ENCODE measurements at regions of chr6 and their contacts with region 1.

Region 1: DNA sequence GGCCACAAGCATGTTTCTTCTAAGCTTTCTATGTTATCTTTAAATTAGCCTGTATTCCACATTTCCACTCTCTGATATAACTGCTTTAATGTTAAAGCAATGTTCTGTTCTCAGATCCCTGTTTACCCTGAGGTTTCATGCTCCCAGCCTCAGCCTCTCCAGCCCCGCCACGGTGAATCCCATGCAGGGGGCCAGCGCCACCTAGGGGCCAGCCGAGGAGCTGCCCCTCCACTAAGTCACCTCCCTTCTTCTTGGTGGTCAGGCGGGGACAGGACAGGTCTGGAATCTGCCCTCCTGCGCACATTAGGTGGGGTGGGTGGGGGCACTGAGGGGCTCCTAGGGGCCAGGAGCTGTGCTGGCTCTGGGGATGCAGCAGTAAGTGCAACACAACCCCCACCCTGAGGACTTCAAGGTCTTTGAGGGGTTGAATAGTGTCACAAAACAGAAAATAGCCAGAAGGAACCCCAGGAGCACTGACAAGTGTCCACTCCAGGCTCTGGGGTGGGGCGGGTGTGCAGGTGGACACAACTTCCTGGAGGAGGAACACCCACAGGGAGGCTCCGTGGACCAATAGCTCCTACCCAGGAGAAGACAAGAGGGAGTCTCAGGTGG is 61.6 kb downstream of the RAB44 start:
- DNase-seq: peak; percentile 79
- H3K4me3 Mint-ChIP-seq: no peak overlapping the region
- H3K27ac Mint-ChIP-seq: no peak overlapping the region
- H3K4me1 Mint-ChIP-seq: peaks cover 43% of the 10 kb centered on the region
- H3K27me3 Mint-ChIP-seq: no peaks in the 10 kb centered on the region

Region 2: DNA sequence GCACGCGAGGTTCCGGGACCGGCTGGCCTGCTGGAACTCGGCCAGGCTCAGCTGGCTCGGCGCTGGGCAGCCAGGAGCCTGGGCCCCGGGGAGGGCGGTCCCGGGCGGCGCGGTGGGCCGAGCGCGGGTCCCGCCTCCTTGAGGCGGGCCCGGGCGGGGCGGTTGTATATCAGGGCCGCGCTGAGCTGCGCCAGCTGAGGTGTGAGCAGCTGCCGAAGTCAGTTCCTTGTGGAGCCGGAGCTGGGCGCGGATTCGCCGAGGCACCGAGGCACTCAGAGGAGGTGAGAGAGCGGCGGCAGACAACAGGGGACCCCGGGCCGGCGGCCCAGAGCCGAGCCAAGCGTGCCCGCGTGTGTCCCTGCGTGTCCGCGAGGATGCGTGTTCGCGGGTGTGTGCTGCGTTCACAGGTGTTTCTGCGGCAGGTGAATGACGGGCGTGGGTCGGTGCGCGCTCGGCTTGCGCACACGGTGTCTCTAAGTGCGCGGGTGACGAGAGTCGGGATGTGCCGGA is 80.7 kb before region 1 on chr6 and contains the start of gene CDKN1A:
- CTCF ChIA-PET with region 1: interaction called, 11 read pairs
- POLR2A ChIA-PET with region 1: no interaction called
- DNase-seq: peak; percentile 76
- H3K4me3 Mint-ChIP-seq: peak within 1 kb of the TSS; percentile 96
- H3K27ac Mint-ChIP-seq: peak within 1 kb of the TSS; percentile 90
- H3K4me1 Mint-ChIP-seq: peaks cover 60% of the 10 kb centered on the region
- H3K27me3 Mint-ChIP-seq: peaks cover 15% of the 10 kb centered on the region
- total RNA-seq, gene CDKN1A: 36.7 to 39.5 TPM

Region 3: DNA sequence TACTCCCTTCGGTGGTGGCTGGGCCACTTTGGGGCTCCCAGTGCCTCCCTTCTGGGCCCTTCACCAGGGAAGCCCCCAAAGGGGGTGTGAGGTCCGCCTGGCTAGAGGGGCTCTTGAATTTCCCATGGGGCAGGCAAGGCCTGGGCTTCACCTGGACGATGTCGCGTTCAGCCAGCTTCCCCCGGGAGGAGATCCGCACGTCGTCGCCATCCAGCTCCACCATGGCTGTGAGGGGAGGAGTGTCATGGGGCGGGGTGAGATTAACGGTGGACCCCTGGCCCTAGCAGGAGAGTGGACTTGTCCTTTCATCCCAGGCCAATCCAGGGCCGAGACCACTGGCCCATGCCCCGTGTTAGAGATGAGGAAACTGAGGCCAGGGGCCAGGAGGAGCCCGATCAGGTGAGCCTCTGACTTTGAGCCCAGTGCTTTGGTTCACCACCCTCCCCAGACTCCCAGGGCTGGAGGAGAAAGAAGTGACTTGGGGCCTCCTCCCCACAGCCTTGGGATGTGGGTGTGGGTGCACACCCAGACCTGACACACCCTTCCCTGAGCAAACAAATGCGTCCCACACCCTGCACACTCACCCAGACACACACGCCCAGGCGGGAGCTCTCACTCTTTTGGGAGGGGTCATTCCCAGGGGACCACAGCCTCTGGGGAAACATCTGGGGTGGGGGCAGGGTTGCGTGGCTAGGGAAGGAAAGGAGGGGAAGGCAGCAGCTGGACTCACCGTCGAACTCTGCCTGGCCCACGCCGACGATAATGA is 15.5 kb before region 1 on chr6:
- CTCF ChIA-PET with region 1: interaction called, 12 read pairs
- POLR2A ChIA-PET with region 1: no interaction called
- DNase-seq: no peak
- H3K4me3 Mint-ChIP-seq: peak overlapping the region; percentile 5
- H3K27ac Mint-ChIP-seq: peak overlapping the region; percentile 62
- H3K4me1 Mint-ChIP-seq: peaks cover 28% of the 10 kb centered on the region
- H3K27me3 Mint-ChIP-seq: no peaks in the 10 kb centered on the region

Region 4: GRCh38 chr6:36780442-36781177 is 21.4 kb after region 1 on chr6:
- CTCF ChIA-PET with region 1: interaction called, 157 read pairs
- POLR2A ChIA-PET with region 1: no interaction called
- DNase-seq: no peak
- H3K4me3 Mint-ChIP-seq: no peak overlapping the region
- H3K27ac Mint-ChIP-seq: no peak overlapping the region
- H3K4me1 Mint-ChIP-seq: peaks cover 12% of the 10 kb centered on the region
- H3K27me3 Mint-ChIP-seq: peaks cover 11% of the 10 kb centered on the region

Region 5: DNA sequence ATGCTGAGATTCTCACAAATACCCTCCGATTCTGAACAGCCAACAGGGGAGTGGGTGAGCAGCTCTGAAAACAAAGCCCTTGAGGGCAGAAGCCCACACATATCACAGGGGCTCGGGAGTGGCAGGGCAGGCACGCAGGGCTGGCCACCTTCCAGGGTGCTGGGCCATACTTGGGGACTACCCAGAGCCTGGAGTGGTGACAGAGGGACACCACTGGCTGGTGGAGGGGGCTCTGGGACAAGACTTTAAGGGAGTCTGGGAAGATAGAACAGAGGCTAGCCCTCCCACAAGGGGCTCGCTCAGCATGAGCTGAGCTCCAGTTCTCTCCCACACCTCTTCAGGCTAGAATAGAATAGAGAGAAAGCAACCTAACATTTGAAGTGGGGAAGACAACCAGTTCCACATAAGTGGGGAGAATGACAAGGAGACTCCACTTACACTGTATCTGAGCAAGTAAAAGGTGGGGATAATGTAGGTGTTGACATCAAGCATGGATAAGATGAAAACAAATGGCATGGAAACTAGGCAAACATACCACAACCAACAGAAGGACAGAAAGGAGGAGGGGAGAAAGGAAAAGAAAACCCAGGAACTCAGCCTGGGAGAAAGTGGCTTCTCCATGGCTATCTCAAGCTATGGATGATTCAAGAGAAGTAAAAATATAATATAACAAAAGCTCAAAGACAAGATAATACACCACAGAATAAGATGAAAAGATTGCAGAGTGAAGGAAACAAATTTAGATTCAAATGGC is 108.4 kb after region 1 on chr6:
- CTCF ChIA-PET with region 1: no interaction called
- POLR2A ChIA-PET with region 1: no interaction called
- DNase-seq: no peak
- H3K4me3 Mint-ChIP-seq: no peak overlapping the region
- H3K27ac Mint-ChIP-seq: peak overlapping the region; percentile 11
- H3K4me1 Mint-ChIP-seq: peaks cover 75% of the 10 kb centered on the region
- H3K27me3 Mint-ChIP-seq: no peaks in the 10 kb centered on the region